Activated B cell treated with CpG ODN at 0.5 μM for 24 hours (primary cell): ENCODE measurements at regions of chr2 and their contacts with region 1.

Region 1: DNA sequence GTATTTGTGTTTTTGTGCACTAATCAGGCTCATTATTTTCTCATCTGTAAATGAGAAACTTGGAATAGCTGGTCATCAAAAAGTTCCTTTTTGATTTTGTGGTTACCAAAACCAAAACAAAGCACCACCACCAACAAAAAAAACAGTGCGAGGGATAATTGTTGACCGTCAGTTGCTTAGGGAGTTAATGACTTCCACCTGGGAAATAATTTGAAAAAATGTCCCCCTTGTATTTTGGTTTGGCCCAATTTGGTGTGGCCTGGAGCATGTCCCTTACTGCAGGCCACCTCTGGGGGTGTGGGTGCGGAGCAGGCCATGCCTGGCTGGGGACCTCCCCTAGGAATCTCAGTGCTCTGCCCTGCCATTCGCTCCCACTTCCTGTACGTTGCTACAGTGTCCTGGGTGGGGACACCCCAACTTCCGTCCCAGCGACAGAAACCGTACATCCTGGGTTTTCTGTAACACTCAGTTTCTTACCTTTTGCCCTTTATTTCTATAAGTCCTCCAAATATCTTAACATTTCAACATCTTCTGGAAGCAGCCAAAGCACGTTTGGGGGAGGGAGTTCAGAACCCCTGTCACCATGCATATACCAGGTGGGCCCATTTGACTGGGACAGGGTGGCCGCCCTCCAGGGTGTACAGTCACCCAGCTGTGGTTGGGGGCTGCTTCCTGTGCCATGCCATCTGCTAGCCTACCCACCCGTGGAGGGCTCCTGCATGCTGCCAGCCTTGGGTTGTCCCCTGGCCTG is 31.3 kb downstream of the NCK2 start:
- DNase-seq: peak; percentile 64
- ATAC-seq: peak; percentile 96
- H3K4me3 Mint-ChIP-seq: peak overlapping the region; percentile 57
- H3K27ac Mint-ChIP-seq: peak overlapping the region; percentile 93
- H3K4me1 Mint-ChIP-seq: peaks cover 87% of the 10 kb centered on the region
- H3K27me3 Mint-ChIP-seq: no peaks in the 10 kb centered on the region
- CTCF ChIP-seq: no peak

Region 2: DNA sequence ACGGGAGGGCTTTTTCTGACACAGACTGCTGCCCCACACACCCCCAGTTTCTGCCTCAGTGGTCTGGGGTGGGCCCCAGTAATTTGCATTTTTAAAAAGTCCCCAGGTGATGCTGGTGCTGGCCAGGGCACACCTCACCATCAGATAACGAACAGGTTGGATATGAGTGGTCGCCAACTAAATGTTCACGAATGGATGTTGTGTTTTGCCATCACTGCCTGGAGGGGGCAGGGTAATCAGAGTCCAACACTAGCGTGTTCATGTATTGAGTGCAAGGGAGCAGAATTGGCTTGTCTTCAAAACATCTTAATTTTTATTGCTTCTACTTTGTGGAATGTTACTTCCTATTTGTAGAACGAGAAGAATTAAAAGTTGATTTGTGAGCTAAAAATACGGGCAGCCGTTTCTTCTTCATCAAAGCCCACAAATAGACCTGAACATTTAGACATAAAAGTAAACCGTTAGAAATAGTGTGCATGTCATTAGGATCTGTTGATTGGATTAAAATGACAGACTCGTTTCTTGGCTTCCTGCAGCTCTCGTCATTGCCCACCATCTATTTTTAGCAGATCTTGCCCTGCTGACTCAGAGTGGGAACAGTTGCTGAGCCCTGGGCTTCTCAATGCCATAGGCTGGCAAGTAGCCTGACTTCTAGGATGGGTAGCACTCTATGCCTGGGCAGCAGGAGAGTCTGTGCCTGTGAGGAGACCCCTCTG is 13.9 kb after region 1 on chr2:
- CTCF ChIA-PET with region 1: interaction called, 15 read pairs
- POLR2A ChIA-PET with region 1: interaction called, 20 read pairs
- intact Hi-C with region 1: loop called (anchors 1 kb)
- DNase-seq: no peak
- ATAC-seq: peak; percentile 81
- H3K4me3 Mint-ChIP-seq: peak overlapping the region; percentile 64
- H3K27ac Mint-ChIP-seq: peak overlapping the region; percentile 84
- H3K4me1 Mint-ChIP-seq: peaks cover 90% of the 10 kb centered on the region
- H3K27me3 Mint-ChIP-seq: no peaks in the 10 kb centered on the region
- CTCF ChIP-seq: no peak

Region 3: GRCh38 chr2:105802587-105802986 is 26.6 kb after region 1 on chr2:
- CTCF ChIA-PET with region 1: no interaction called
- POLR2A ChIA-PET with region 1: interaction called, 27 read pairs
- intact Hi-C with region 1: loop called (anchors 1 kb)
- DNase-seq: peak; percentile 41
- ATAC-seq: peak; percentile 87
- H3K4me3 Mint-ChIP-seq: peak overlapping the region; percentile 65
- H3K27ac Mint-ChIP-seq: peak overlapping the region; percentile 90
- H3K4me1 Mint-ChIP-seq: peaks cover 93% of the 10 kb centered on the region
- H3K27me3 Mint-ChIP-seq: no peaks in the 10 kb centered on the region
- CTCF ChIP-seq: no peak

Region 4: GRCh38 chr2:105873721-105874120 is 97.7 kb after region 1 on chr2:
- CTCF ChIA-PET with region 1: no interaction called
- POLR2A ChIA-PET with region 1: interaction called, 4 read pairs
- intact Hi-C with region 1: loop called (anchors 1 kb)
- DNase-seq: peak; percentile 53
- ATAC-seq: peak; percentile 93
- H3K4me3 Mint-ChIP-seq: peak overlapping the region; percentile 59
- H3K27ac Mint-ChIP-seq: peak overlapping the region; percentile 75
- H3K4me1 Mint-ChIP-seq: peaks cover 92% of the 10 kb centered on the region
- H3K27me3 Mint-ChIP-seq: no peaks in the 10 kb centered on the region
- CTCF ChIP-seq: no peak

Region 5: GRCh38 chr2:105929516-105929915 is 153.5 kb after region 1 on chr2:
- CTCF ChIA-PET with region 1: no interaction called
- POLR2A ChIA-PET with region 1: no interaction called
- intact Hi-C with region 1: no loop called
- DNase-seq: no peak
- ATAC-seq: no peak
- H3K4me3 Mint-ChIP-seq: no peak overlapping the region
- H3K27ac Mint-ChIP-seq: no peak overlapping the region
- H3K4me1 Mint-ChIP-seq: no peaks in the 10 kb centered on the region
- H3K27me3 Mint-ChIP-seq: no peaks in the 10 kb centered on the region
- CTCF ChIP-seq: no peak

Region 6: DNA sequence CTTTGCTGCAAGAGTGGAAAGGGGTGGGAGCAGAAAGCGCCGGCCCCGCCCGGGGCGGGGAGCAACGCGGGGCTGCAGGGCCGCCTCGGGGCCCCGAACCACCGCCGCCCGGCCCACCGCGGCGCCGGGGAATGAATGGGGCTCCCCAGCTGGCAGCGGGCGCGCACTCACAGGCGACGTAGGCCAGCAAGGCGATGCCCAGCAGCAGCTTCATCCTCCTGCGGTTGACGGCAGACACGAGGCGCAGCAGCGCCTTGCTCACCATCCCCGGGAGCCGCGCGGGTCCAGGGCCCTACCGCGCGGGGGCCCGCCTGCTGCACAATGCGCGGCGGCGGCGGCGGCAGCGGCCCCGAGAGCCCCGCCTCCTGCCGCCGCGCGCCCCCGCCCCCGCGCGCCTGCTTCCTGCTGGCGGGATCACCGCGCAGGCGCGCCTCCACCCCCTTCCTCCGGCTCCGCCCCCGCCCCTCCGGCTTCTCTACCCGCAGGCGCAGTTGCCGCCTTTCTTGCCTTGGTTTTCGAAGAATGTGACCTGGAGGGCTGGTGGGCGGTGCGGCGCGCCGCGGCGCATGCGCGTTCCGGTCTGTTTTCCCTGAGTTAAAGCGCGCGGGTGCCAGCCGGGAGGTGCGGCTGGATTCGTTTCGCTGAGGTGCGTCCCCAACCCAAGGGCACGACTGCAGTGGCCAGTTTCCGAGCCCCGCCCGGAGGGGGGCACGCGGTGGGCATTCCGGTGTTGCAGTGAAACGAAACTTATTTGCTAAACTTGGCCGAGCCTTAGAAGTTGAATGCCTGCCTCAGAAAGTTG is 418.2 kb after region 1 on chr2 and contains the start of gene UXS1:
- CTCF ChIA-PET with region 1: no interaction called
- POLR2A ChIA-PET with region 1: no interaction called
- intact Hi-C with region 1: loop called (anchors 10 kb)
- DNase-seq: peak; percentile 98
- ATAC-seq: peak; percentile 81
- H3K4me3 Mint-ChIP-seq: peak within 1 kb of the TSS; percentile 95
- H3K27ac Mint-ChIP-seq: peak within 1 kb of the TSS; percentile 91
- H3K4me1 Mint-ChIP-seq: peaks cover 42% of the 10 kb centered on the region
- H3K27me3 Mint-ChIP-seq: no peaks in the 10 kb centered on the region
- CTCF ChIP-seq: no peak
- total RNA-seq, gene UXS1: 20.0 and 24.2 TPM in 2 replicates